Activated CD4-positive, alpha-beta T cell treated with anti-CD3 and anti-CD28 coated beads, Interleukin-2, amount 10 ng/mL, durations not matched to agents 7 days and 5 days (primary cell): ENCODE measurements at regions of chr6 and their contacts with region 1.

Region 1: DNA sequence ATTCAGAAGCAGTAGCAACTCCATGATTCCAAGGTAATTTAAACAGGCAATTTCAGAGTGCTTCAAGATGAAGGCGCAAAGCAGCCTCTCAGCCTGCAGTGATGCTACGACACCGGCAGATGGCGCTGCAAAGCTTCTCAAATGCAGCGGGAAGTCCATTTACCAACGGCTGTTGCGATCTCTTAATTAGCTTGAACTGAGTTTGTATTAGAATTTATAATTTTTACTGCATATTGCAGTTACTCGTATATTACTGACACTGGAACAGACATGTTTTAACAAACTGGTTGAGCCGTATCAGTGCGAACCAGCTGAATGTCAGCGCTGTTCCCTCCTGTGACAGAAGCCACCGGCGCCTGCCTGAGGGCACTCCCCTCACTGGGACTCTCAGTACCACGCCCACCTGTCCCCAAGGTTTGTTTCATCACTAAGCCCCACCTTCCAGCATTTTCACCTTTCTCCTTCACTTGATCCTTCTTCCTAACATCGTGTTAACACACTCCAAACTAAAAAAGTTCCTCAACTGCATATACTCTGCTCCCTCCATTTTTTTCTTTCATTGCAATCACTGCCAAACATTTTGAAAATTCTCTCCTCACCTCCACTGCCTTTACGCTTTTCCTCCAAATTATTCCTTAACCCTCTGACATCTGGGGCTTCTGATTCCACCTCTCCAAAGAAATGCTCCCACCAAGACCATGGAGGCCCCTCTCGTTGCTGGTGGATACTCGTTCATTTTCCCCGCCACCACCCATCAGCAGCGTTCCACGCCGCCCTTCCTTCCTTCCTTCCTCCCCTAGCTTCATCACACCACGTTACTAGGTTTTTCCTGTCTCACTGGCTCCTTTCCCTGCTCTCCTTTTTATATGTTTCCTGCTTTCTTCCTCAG is 14.5 kb downstream of the GNL1 start:
- DNase-seq: peak; percentile 83
- H3K4me3 Mint-ChIP-seq: peak overlapping the region; percentile 73
- H3K27ac Mint-ChIP-seq: peak overlapping the region; percentile 92
- H3K4me1 Mint-ChIP-seq: peaks cover 38% of the 10 kb centered on the region
- H3K27me3 Mint-ChIP-seq: peaks cover 7% of the 10 kb centered on the region

Region 2: GRCh38 chr6:30483677-30484279 is 58.0 kb before region 1 on chr6:
- CTCF ChIA-PET with region 1: interaction called, 113 read pairs
- POLR2A ChIA-PET with region 1: no interaction called
- DNase-seq: peak; percentile 62
- H3K4me3 Mint-ChIP-seq: no peak overlapping the region
- H3K27ac Mint-ChIP-seq: no peak overlapping the region
- H3K4me1 Mint-ChIP-seq: peaks cover 33% of the 10 kb centered on the region
- H3K27me3 Mint-ChIP-seq: peaks cover 43% of the 10 kb centered on the region

Region 3: DNA sequence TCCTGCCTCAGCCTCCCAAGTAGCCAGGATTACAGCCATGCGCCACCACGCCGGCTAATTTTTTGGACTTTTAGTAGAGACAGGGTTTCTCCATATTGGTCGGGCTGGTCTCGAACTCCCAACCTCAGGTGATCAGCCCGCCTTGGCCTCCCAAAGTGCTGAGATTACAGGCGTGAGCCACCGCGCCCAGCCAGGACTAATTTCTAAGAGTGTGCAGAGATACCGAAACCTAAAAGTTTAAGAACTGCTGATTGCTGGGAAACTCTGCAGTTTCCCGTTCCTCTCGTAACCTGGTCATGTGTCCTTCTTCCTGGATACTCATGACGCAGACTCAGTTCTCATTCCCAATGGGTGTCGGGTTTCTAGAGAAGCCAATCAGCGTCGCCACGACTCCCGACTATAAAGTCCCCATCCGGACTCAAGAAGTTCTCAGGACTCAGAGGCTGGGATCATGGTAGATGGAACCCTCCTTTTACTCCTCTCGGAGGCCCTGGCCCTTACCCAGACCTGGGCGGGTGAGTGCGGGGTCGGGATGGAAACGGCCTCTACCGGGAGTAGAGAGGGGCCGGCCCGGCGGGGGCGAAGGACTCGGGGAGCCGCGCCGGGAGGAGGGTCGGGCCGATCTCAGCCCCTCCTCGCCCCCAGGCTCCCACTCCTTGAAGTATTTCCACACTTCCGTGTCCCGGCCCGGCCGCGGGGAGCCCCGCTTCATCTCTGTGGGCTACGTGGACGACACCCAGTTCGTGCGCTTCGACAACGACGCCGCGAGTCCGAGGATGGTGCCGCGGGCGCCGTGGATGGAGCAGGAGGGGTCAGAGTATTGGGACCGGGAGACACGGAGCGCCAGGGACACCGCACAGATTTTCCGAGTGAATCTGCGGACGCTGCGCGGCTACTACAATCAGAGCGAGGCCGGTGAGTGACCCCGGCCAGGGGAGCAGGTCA is 52.4 kb before region 1 on chr6 and contains the start of gene HLA-E:
- CTCF ChIA-PET with region 1: interaction called, 113 read pairs
- POLR2A ChIA-PET with region 1: interaction called, 4 read pairs
- DNase-seq: peak; percentile 97
- H3K4me3 Mint-ChIP-seq: peak within 1 kb of the TSS; percentile 100
- H3K27ac Mint-ChIP-seq: peak within 1 kb of the TSS; percentile 96
- H3K4me1 Mint-ChIP-seq: peaks cover 51% of the 10 kb centered on the region
- H3K27me3 Mint-ChIP-seq: no peaks in the 10 kb centered on the region
- total RNA-seq, gene HLA-E: 706 to 753 TPM

Region 4: GRCh38 chr6:30508890-30509736 is 32.6 kb before region 1 on chr6:
- CTCF ChIA-PET with region 1: interaction called, 15 read pairs
- POLR2A ChIA-PET with region 1: no interaction called
- DNase-seq: peak; percentile 68
- H3K4me3 Mint-ChIP-seq: peak overlapping the region; percentile 71
- H3K27ac Mint-ChIP-seq: peak overlapping the region; percentile 90
- H3K4me1 Mint-ChIP-seq: peaks cover 51% of the 10 kb centered on the region
- H3K27me3 Mint-ChIP-seq: no peaks in the 10 kb centered on the region

Region 5: DNA sequence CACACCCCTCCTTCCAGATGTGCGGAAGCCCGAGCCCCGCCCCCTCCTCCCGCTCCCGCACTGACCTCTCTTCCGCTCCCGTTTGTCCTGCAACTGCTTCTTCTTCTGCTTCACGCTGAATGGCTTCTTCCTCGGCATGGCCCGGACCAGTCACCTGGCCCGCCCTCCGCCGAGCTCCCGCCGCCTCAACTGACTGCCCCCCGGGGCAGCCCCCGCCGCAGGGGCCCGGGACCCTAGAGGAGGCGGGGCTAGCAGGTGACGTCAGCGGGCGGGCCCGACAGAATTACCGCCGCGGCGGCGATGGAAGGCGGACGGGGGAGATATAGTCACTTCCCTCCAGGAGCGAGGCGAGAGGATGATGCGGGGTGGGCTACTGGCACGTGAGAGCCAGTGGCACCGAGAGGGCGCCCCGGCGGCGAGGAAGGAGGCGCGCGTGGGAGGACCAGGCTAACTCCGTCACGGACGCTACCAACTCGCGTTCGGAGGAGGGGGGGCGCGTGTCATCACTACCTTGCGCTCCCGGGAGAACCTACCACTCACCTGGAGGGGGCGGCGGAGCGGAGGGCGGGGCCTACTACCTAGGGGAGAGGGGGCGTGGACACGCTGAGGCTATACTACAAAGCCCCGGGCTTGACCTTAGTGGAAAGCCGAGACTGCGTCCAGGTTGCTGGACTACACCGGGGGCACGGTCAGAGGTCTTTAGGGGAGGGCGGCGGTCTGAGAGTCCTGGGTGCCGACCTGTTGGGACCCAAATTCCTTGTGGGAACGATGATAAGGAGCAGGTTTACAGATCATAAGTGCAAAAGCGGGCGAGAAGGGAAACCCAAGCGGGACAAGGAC is 14.5 kb after region 1 on chr6 and contains the start of gene GNL1:
- CTCF ChIA-PET with region 1: interaction called, 44 read pairs
- POLR2A ChIA-PET with region 1: no interaction called
- DNase-seq: peak; percentile 99
- H3K4me3 Mint-ChIP-seq: peak within 1 kb of the TSS; percentile 96
- H3K27ac Mint-ChIP-seq: peak within 1 kb of the TSS; percentile 99
- H3K4me1 Mint-ChIP-seq: peaks cover 39% of the 10 kb centered on the region
- H3K27me3 Mint-ChIP-seq: no peaks in the 10 kb centered on the region
- total RNA-seq, gene GNL1: 51.5 to 59.9 TPM

Region 6: DNA sequence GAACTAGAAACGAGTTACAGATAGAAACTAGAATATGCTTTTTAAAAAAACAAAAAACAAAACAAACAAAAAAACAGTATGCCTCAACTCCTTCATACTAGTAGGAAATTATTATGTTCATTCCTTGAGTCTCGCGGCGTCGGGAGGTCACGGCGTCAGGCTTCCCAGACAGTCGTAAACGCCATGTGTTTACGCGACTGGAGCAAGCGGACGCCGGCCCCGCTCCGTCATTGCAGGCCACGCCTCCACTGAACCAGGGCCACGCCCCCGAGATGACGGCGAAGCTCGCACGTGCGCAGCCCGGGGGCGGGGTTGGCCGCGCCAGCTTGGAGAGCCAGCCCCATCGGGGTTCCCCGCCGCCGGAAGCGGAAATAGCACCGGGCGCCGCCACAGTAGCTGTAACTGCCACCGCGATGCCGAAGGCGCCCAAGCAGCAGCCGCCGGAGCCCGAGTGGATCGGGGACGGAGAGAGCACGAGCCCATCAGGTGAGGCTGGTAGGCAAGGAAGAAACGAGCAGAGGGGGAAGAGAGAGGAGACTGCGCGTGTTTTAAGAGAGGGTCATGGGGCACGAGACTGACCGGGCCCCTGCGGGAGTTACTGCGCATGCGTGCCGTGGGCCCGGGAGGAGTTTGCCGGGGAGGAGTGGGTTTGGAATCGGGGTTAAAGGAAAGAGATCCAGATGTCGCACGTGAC is 29.5 kb after region 1 on chr6 and contains the start of gene ABCF1:
- CTCF ChIA-PET with region 1: interaction called, 10 read pairs
- POLR2A ChIA-PET with region 1: no interaction called
- DNase-seq: peak; percentile 99
- H3K4me3 Mint-ChIP-seq: peak within 1 kb of the TSS; percentile 94
- H3K27ac Mint-ChIP-seq: peak within 1 kb of the TSS; percentile 97
- H3K4me1 Mint-ChIP-seq: peaks cover 59% of the 10 kb centered on the region
- H3K27me3 Mint-ChIP-seq: no peaks in the 10 kb centered on the region
- total RNA-seq, gene ABCF1: 72.2 to 78.0 TPM

Region 7: DNA sequence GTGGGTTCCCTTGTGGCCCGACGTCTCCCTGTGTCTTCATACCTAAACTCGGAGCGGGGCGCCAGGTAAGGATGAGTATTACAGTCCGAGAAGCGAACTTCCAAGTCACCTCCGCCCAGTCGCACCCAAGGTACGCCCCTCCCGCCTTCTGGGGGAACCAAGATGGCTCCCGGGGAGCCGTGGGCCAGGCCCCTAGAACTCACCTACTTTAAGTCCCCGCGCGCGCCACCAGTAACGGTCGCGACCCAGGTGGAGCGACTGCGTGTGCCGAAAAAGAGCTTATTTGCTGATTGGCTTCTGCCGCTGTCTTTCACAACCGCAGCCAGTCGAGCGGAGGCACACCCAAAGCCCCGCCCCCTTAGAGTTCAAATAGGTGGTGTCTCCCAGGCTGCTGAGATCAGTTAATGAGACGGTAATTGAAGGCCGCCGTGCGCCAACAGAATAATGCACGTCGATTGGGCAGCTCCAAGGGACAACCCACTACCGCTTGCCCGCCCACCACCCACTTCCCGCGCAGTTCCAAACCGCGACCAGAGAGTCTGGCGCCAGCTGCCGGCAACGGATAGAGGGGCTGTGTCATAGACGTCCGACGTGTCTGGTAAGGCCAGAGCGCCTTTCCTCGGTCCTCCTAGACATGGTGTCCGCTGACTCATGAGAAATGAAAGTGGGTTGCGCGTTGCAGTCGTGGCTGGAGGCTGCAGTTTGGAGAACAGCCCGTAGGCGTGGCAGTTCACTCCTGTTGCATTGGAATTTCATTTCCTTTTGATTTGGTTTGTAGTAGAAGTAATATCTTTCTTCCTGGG is 175.5 kb after region 1 on chr6 and contains the start of gene MDC1:
- CTCF ChIA-PET with region 1: interaction called, 15 read pairs
- POLR2A ChIA-PET with region 1: no interaction called
- DNase-seq: peak; percentile 100
- H3K4me3 Mint-ChIP-seq: peak within 1 kb of the TSS; percentile 97
- H3K27ac Mint-ChIP-seq: peak within 1 kb of the TSS; percentile 98
- H3K4me1 Mint-ChIP-seq: peaks cover 58% of the 10 kb centered on the region
- H3K27me3 Mint-ChIP-seq: no peaks in the 10 kb centered on the region
- total RNA-seq, gene MDC1: 46.8 to 53.2 TPM